ENCODE measurements at regions of chr5 and their contacts with region 1.

Region 1: GRCh38 chr5:55172051-55172899 is 702 bp downstream of the CDC20B start:
- DNase-seq: peak; percentile 65 to 75
- H3K4me3 ChIP-seq: peak overlapping the region; percentile 50
- H3K4me3 Mint-ChIP-seq: peak overlapping the region; percentile 89
- H3K27ac Mint-ChIP-seq: no peak overlapping the region
- H3K4me1 ChIP-seq: peaks cover 11% of the 10 kb centered on the region
- H3K4me1 Mint-ChIP-seq: peaks cover 8% of the 10 kb centered on the region
- H3K27me3 ChIP-seq: peaks cover 3% of the 10 kb centered on the region
- H3K27me3 Mint-ChIP-seq: peaks cover 12% of the 10 kb centered on the region
- CTCF ChIP-seq: peak; percentile 73 to 74

Region 2: GRCh38 chr5:54956922-54957321 is 215.4 kb before region 1 on chr5:
- CTCF ChIA-PET with region 1: no interaction called
- POLR2A ChIA-PET with region 1: no interaction called
- intact Hi-C with region 1: no loop called
- DNase-seq: no peak
- H3K4me3 ChIP-seq: no peak overlapping the region
- H3K4me3 Mint-ChIP-seq: no peak overlapping the region
- H3K27ac Mint-ChIP-seq: no peak overlapping the region
- H3K4me1 ChIP-seq: no peaks in the 10 kb centered on the region
- H3K4me1 Mint-ChIP-seq: no peaks in the 10 kb centered on the region
- H3K27me3 ChIP-seq: no peaks in the 10 kb centered on the region
- H3K27me3 Mint-ChIP-seq: peaks cover 20% of the 10 kb centered on the region
- CTCF ChIP-seq: no peak

Region 3: DNA sequence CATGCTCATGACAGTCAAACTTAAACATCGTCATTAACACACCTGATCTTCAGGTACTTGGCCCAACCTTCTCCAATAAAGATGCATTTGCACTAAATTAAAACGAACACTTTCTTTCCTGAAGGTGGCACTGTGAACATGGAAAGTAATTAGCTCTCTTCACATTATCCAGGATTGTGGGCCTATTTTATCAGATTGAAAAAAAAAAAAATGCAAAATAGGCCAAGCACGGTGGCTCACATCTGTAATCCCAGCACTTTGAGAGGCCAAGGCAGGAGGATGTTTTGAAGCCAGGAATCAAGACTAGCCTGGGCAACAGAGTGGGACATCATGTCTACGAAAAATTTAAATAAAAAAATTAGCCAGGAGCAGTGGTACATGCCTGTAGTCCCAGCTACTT is 15.1 kb after region 1 on chr5:
- CTCF ChIA-PET with region 1: interaction called, 8 read pairs
- POLR2A ChIA-PET with region 1: no interaction called
- intact Hi-C with region 1: loop called (anchors 1 kb)
- DNase-seq: peak in 1 of 2 experiments; percentile 25
- H3K4me3 ChIP-seq: no peak overlapping the region
- H3K4me3 Mint-ChIP-seq: no peak overlapping the region
- H3K27ac Mint-ChIP-seq: no peak overlapping the region
- H3K4me1 ChIP-seq: peaks cover 6% of the 10 kb centered on the region; the same call in 1 of the 2 replicates
- H3K4me1 Mint-ChIP-seq: peaks cover 6% of the 10 kb centered on the region
- H3K27me3 ChIP-seq: peaks cover 4% of the 10 kb centered on the region
- H3K27me3 Mint-ChIP-seq: peaks cover 23% of the 10 kb centered on the region
- CTCF ChIP-seq: peak; percentile 32 to 49

Region 4: DNA sequence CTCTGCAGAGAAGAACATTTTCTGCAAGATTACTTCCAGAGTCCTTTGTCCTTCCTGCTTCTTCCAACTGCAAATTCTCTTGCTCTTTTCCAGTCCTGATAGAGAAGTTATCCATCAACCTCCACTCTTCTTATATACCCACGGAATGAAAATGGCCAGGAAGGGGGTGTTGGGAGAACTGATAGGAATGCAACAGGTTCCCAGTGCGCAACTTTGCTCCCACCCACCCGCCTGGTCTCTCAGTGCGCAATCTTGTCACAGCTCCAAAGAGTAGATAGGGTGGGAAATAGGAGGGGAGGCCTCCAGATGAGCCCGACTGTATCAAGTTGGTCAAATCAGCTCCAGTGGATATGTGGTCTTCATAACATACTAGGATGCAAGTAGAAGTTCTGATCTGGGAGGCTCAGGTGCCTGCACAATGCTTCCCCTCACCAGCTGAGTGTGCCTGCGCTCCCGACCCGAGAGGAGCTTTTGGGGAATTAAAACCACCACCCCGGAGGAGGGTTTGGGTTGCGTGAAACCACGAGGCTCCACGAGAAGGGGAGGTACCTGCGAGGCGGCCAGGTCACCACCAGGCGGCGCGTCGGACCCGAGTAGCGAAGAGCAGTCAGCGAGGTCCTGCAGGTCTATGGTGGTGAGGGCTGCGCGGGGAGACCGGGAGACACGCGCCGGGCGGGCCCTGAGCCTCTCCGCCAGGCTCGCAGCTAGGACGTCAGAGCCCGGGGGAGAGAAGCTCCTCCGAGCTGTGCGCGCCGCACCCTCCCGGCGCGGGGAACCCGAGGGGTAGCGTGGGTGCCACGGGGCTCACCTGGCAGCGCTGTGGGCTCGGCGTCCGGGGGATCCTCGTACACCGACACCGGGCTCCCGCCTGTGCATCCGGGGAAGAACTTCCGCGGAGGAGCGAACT is 54.0 kb after region 1 on chr5:
- CTCF ChIA-PET with region 1: no interaction called
- POLR2A ChIA-PET with region 1: no interaction called
- intact Hi-C with region 1: loop called (anchors 1 kb)
- DNase-seq: peak; percentile 86 to 89
- H3K4me3 ChIP-seq: peak overlapping the region; percentile 82
- H3K4me3 Mint-ChIP-seq: peak overlapping the region; percentile 87
- H3K27ac Mint-ChIP-seq: no peak overlapping the region
- H3K4me1 ChIP-seq: no peaks in the 10 kb centered on the region
- H3K4me1 Mint-ChIP-seq: peaks cover 10% of the 10 kb centered on the region
- H3K27me3 ChIP-seq: peaks cover 3% of the 10 kb centered on the region
- H3K27me3 Mint-ChIP-seq: no peaks in the 10 kb centered on the region
- CTCF ChIP-seq: peak; percentile 83 to 91

Region 5: GRCh38 chr5:55232985-55233928 is 61.0 kb after region 1 on chr5 and contains the start of gene CCNO:
- CTCF ChIA-PET with region 1: interaction called, 6 read pairs
- POLR2A ChIA-PET with region 1: no interaction called
- intact Hi-C with region 1: loop called (anchors 1 kb)
- DNase-seq: peak; percentile 84 to 85
- H3K4me3 ChIP-seq: peak within 1 kb of the TSS; percentile 57
- H3K4me3 Mint-ChIP-seq: peak within 1 kb of the TSS; percentile 90
- H3K27ac Mint-ChIP-seq: peak within 1 kb of the TSS; percentile 53
- H3K4me1 ChIP-seq: peaks cover 7% of the 10 kb centered on the region
- H3K4me1 Mint-ChIP-seq: peaks cover 3% of the 10 kb centered on the region
- H3K27me3 ChIP-seq: peaks cover 4% of the 10 kb centered on the region
- H3K27me3 Mint-ChIP-seq: no peaks in the 10 kb centered on the region
- CTCF ChIP-seq: peak in 1 of 2 experiments; percentile 1
- total RNA-seq, gene CCNO: 3.1 and 3.9 TPM in 2 replicates

Region 6: GRCh38 chr5:55407059-55407684 is 234.9 kb after region 1 on chr5:
- CTCF ChIA-PET with region 1: no interaction called
- POLR2A ChIA-PET with region 1: no interaction called
- intact Hi-C with region 1: loop called (anchors 10 kb)
- DNase-seq: peak in 1 of 2 experiments; percentile 23
- H3K4me3 ChIP-seq: no peak overlapping the region
- H3K4me3 Mint-ChIP-seq: no peak overlapping the region
- H3K27ac Mint-ChIP-seq: no peak overlapping the region
- H3K4me1 ChIP-seq: no peaks in the 10 kb centered on the region
- H3K4me1 Mint-ChIP-seq: peaks cover 6% of the 10 kb centered on the region
- H3K27me3 ChIP-seq: no peaks in the 10 kb centered on the region
- H3K27me3 Mint-ChIP-seq: no peaks in the 10 kb centered on the region
- CTCF ChIP-seq: peak; percentile 62 to 70

Region 7: GRCh38 chr5:56175488-56175887 is 1003.2 kb after region 1 on chr5:
- CTCF ChIA-PET with region 1: no interaction called
- POLR2A ChIA-PET with region 1: no interaction called
- intact Hi-C with region 1: no loop called
- DNase-seq: peak; percentile 56 to 68
- H3K4me3 ChIP-seq: no peak overlapping the region
- H3K4me3 Mint-ChIP-seq: peak overlapping the region; percentile 15
- H3K27ac Mint-ChIP-seq: peak overlapping the region; percentile 96
- H3K4me1 ChIP-seq: peaks cover 19% of the 10 kb centered on the region
- H3K4me1 Mint-ChIP-seq: peaks cover 20% of the 10 kb centered on the region
- H3K27me3 ChIP-seq: no peaks in the 10 kb centered on the region
- H3K27me3 Mint-ChIP-seq: no peaks in the 10 kb centered on the region
- CTCF ChIP-seq: no peak

Measured in Caco-2 (cell line).